Left ventricle myocardium inferior (tissue), 1 donor: ENCODE measurements at regions of chr17 and their contacts with region 1.

Region 1: DNA sequence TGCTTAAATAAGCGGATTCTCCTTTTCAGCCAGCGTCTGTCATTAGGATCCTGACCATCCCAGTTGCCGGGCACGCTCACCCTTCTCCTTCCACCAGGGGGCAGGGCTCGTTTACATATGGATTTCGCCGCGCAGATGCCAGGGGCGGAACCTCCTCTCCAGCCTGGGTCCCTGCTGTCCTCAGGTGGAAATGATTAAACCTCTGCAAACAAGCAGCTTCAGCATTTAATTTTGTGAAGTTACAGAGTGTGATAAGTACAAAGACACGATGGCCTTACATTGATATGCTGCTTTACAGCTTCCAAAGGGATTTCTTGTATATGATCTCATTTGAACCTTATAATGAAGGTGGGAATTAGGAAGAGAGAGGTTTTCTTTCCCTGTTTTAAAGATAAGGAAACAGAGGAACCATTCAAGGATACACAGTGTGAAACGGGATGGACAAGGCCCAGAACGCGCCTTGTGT is 3.9 kb upstream of the KRT28 start:
- DNase-seq: peak; percentile 70
- H3K4me3 ChIP-seq: no peak overlapping the region
- H3K27ac ChIP-seq: no peak overlapping the region
- H3K4me1 ChIP-seq: peaks cover 5% of the 10 kb centered on the region
- H3K27me3 ChIP-seq: peaks cover 36% of the 10 kb centered on the region
- CTCF ChIP-seq: peak; percentile 90

Region 2: DNA sequence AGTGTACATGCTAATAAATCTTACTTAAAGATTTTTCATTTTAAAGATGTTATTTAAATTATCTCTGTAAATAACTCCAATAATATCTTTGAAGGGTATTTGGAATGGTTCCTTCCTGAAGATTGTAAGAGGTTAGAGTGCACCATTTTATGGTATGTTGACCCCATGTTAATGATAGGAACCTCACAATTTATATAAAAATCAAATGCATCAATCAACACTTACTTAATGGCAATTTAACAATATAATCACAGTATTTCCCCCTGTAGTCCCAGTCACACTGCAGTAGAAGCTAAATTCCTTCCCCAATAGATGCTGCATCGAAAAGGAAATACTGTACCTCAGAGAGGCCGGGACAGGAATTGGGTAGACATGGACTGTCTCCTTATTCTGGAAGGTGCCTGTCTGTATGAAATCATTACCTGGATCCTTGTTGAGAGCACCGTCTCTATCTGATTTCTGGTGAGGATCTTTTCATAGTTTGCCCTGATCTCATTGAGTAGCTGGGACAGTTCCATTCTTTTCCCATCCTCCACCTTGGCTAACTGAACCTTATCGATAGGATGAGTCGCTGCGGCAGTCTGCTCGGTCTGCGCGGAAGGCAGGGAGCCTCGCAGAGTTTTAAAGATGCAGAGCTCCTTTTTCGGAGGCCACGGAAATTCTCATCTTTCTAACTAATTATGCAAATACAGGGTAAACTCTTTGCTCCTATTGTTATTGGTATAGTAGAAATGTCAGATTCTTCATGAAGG is 138.9 kb before region 1 on chr17 and contains the start of gene KRT222:
- intact Hi-C with region 1: no loop called
- DNase-seq: no peak
- H3K4me3 ChIP-seq: peak within 1 kb of the TSS; percentile 45
- H3K27ac ChIP-seq: no peak within 1 kb of the TSS
- H3K4me1 ChIP-seq: no peaks in the 10 kb centered on the region
- H3K27me3 ChIP-seq: peaks cover 59% of the 10 kb centered on the region
- CTCF ChIP-seq: no peak
- total RNA-seq, gene KRT222: 0.38 TPM

Region 3: DNA sequence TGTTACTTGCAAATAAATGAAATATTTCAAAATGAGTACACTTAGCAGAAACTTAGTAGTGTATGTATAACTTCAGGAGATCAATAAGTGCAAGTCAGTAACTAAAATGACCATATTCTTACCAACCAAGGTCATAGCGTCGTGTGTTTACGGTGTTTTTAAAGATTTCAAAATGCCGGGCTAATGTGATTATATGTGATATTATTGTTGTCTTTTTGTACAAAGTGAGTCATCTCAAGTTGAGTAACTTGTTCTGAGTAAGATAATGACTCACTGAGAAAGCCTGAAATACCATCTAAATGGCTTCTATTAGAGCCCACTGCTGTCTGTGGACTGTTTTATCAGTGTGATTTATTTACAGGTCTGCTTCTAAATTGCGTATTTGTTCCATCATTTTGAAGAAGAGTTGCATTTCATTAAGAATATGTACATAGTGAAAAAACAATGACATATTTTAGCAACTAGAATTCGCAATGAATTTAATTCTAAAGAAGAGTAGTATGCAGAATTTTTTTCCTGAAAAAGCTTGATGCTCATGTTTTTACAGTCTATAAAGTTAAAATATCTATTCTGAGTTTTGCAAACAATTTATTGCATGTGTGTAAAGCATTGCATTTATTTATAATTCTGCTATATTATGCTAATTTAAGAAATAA is 50.6 kb after region 1 on chr17:
- intact Hi-C with region 1: loop called (anchors 10 kb)
- DNase-seq: no peak
- H3K4me3 ChIP-seq: no peak overlapping the region
- H3K27ac ChIP-seq: no peak overlapping the region
- H3K4me1 ChIP-seq: no peaks in the 10 kb centered on the region
- H3K27me3 ChIP-seq: peaks cover 5% of the 10 kb centered on the region
- CTCF ChIP-seq: no peak